HepG2 (cell line): ENCODE measurements at regions of chr17 and their contacts with region 1.

Region 1: DNA sequence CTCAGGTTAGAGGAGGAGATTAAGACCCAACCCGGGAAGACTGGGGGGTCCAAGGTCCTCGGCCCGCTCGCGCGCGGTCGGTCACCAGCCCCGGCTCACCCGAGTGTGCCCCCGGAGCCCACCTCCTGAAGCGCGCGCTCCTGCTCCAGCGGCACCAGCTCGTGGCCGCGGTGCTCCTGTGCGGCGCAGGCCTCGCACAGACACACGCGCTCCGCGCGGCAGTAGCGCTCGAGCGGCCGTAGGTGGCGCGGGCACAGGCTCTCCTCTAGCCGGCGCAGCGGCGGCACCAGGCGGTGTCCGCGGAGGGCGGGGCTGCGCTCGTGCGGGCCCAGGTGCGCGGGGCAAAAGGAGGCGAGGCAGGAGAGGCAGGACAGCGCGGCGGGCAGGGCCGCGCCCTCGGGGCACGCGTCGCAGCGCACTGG is 618 bp downstream of the TRIM47 start:
- DNase-seq: peak; percentile 68
- ATAC-seq: peak; percentile 54
- H3K4me3 ChIP-seq: peak overlapping the region; percentile 71 to 84 (median 84)
- H3K27ac ChIP-seq: peak overlapping the region; percentile 99
- H3K4me1 ChIP-seq: peaks cover 46% of the 10 kb centered on the region
- H3K27me3 ChIP-seq: no peaks in the 10 kb centered on the region
- CTCF ChIP-seq: peak; percentile 59; the same call in 1 of the 2 replicates
- EP300 ChIP-seq: 0 out of 4 replicates have a peak, but pooled peaks of 1 of the 2 experiments have one; percentile 22
- POLR2A ChIP-seq: no peak; a peak in 1 of 4 replicates
- RAD21 ChIP-seq: peak; percentile 90

Region 2: DNA sequence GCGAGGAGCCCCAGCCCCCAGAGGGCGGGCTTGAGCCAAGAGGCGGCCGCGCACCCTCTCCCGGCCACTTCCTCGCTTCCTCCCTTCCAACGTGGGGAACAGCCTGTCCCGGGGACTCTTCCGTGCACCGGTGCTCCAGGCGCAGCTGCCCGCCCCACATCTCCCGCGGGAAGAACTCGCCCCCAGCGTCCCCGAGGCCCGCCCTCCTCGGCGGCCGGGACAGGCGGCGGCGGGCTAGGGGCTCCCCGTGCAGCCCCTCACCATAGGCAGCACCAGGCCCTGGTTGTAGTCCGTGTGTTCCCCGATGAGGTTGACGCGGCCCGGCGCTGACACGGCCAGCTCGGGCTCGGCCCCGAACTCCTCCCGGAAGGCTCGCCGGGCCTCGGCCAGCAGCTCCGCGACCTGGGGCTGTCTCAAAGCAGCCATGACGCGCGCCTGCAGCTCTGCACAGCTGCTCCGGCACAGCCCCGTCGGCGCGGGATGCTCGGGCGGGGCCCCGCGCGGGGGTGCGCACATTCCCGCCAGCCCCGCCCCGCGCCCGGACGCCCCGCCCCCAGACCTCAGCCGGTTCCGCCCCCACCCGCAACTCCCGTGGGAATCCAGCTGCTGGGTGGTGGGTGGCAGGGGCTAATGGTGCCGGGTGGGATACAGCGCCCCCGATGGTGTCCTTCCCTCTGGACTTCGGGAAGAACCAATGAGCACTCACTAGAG is 112.9 kb before region 1 on chr17 and contains the start of gene GALK1:
- CTCF ChIA-PET with region 1: no interaction called
- POLR2A ChIA-PET with region 1: interaction called, 24 read pairs
- in situ Hi-C with region 1: no loop called
- intact Hi-C with region 1: no loop called
- DNase-seq: peak; percentile 59
- ATAC-seq: peak; percentile 73
- H3K4me3 ChIP-seq: peak within 1 kb of the TSS; percentile 77 to 87 (median 78)
- H3K27ac ChIP-seq: peak within 1 kb of the TSS; percentile 79
- H3K4me1 ChIP-seq: peaks cover 60% of the 10 kb centered on the region
- H3K27me3 ChIP-seq: no peaks in the 10 kb centered on the region
- CTCF ChIP-seq: peak; percentile 78
- EP300 ChIP-seq: no peak
- POLR2A ChIP-seq: peak in 1 of 2 experiments; percentile 73; a peak in 2 of 4 replicates
- RAD21 ChIP-seq: peak; percentile 46
- total RNA-seq, gene GALK1: 93.6 and 95.6 TPM in 2 replicates

Region 3: DNA sequence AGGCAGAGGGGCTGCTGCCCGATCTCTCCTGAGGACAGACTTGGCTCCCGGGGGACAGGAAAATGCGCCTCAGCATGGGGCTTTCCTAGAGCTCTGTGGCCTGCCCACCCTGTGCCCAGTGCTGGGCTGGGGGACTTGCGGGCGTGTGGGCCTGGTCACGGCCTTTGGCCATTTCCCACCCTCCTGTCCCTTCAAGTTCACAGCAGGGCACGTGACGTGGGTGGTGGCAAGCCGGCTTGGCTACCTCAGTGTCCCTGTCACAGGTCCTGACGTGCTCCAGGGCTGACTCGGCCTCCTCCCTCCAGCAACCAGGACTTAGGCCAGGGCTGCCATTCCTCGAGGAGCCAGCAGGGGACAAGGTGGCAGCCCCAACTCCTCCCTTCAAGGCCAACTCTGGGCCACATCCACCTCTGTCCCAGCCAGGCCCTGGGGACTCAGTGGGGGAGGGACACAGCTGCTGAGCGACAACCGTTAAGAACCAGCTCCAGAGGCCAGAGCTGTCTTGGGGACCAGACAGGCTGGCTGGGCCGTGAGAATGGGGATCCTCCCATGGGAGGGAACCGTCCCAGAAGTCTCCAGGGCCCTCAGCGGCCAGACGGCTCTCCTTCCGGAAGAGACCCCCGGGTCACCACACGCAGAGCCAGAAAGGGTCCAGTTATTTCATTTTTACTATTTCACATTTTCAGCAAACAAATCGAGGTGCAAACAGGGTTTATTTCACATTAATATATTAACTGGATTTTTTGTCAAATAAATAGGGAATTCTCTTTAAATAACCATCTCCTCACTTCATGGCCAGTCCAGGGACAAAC is 32.5 kb before region 1 on chr17:
- CTCF ChIA-PET with region 1: interaction called, 4 read pairs
- POLR2A ChIA-PET with region 1: interaction called, 229 read pairs
- in situ Hi-C with region 1: no loop called
- intact Hi-C with region 1: no loop called
- DNase-seq: peak; percentile 86
- ATAC-seq: peak; percentile 65
- H3K4me3 ChIP-seq: peak overlapping the region; percentile 66 to 84 (median 66)
- H3K27ac ChIP-seq: peak overlapping the region; percentile 79
- H3K4me1 ChIP-seq: peaks cover 70% of the 10 kb centered on the region
- H3K27me3 ChIP-seq: no peaks in the 10 kb centered on the region
- CTCF ChIP-seq: peak; percentile 90
- EP300 ChIP-seq: peak in 1 of 2 experiments; percentile 31; a peak in 1 of 4 replicates
- POLR2A ChIP-seq: peak in 1 of 2 experiments; percentile 67; a peak in 2 of 4 replicates
- RAD21 ChIP-seq: peak; percentile 82

Region 4: DNA sequence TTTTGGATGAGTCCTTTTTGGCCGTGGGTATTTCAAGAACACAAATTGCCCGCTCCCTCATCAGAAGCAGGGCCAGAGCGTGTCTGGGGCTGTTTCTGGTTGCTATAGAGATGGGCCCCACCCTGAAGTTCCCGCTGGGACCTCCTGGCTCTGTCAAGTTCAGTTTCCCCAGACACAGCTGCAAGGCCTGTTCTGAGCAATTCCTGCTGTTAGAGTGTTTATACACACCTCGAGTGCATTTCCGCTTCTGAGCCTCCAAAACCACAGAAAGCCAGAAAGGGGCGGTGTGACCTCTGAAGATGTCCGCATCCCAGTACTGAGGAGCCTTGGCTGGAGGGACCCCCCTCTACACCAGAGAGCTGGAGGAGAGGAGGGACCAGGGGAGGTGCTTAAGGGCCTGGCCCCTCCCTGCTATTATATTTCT is 13.3 kb before region 1 on chr17:
- CTCF ChIA-PET with region 1: no interaction called
- POLR2A ChIA-PET with region 1: interaction called, 454 read pairs
- in situ Hi-C with region 1: no loop called
- intact Hi-C with region 1: no loop called
- DNase-seq: no peak
- ATAC-seq: no peak
- H3K4me3 ChIP-seq: no peak overlapping the region
- H3K27ac ChIP-seq: no peak overlapping the region
- H3K4me1 ChIP-seq: peaks cover 69% of the 10 kb centered on the region
- H3K27me3 ChIP-seq: no peaks in the 10 kb centered on the region
- CTCF ChIP-seq: no peak
- EP300 ChIP-seq: no peak
- POLR2A ChIP-seq: no peak
- RAD21 ChIP-seq: no peak

Region 5: DNA sequence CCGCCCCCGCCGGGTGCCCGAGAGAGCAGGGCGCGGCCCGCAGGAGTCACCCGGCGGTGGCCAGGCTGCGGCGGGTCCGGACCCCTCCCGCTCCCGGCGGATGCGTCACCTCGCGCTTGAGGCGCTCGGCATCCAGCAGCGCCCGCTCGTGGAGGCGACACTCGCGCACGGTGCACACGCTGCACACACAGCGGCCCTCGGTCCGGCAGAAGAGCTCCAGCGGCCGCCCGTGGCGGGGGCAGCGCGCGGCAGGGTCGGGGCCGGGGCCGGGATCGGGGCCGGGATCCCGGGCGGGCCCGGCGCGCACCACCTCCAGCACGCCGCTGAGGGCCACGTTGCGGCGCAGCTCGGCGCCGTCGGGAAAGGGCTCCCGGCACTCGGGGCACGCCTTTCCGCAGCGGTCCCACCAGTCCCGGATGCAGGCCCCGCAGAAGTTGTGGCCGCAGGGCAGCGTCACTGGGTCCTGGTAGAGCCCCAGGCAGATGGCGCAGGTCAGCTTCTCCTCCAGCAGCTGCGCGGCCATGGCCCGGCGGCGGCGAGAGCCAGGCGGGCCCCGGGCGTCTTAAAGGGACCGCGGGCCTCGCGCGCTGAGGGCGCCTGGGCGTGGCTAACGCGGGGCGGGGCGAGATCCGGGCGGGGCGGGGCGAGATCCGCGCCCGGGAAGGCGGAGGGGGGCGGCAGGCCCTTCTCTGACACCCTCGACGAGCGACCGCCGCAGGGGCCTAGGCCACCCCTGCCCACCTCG is 18.8 kb after region 1 on chr17 and contains the start of gene TRIM65:
- CTCF ChIA-PET with region 1: interaction called, 5 read pairs
- POLR2A ChIA-PET with region 1: interaction called, 423 read pairs
- in situ Hi-C with region 1: no loop called
- intact Hi-C with region 1: loop called (anchors 1 kb)
- DNase-seq: peak; percentile 56
- ATAC-seq: peak; percentile 18
- H3K4me3 ChIP-seq: peak within 1 kb of the TSS; percentile 68 to 83 (median 75)
- H3K27ac ChIP-seq: peak within 1 kb of the TSS; percentile 79
- H3K4me1 ChIP-seq: peaks cover 46% of the 10 kb centered on the region
- H3K27me3 ChIP-seq: no peaks in the 10 kb centered on the region
- CTCF ChIP-seq: peak; percentile 64
- EP300 ChIP-seq: no peak
- POLR2A ChIP-seq: peak in 1 of 2 experiments; percentile 92; a peak in 2 of 4 replicates
- RAD21 ChIP-seq: peak; percentile 84
- total RNA-seq, gene TRIM65: 22.4 and 24.6 TPM in 2 replicates

Region 6: DNA sequence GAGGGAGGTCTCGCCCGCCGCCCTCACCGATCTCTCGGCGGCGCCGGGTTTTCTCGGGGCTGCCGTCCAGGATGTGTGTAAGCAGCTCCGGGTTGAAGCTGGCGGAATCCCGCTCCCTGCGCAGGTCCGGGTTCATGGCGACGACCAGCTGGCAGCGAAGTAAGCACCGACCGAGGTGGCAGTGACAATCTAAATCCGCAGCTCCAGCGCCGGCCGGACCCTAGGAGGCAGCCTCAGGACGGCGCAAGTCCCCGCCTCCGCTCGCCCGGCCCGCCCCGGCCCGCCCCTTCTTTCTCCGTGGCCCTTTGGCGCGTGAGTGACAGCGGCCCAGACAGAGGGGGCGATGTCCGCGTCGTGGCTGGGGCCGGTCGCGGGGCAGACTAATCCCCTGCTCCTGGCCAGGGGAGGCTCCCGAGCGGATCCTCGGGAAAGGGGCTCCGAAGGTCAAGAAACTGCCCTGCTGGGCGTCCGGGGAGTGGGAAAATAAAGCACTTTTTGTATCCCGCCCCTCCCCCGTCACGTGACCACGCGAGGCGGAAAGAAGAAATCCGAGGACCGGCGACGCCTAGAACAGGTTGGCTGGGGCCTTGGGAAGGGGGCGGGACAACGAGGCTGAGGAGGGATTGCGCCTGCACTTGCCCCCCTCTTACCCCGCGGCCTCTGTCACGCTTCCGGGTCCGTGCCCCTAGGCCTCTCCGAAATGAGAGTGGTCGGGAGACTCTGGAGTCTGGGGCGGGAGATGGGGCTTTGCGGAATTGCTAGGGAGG is 101.4 kb after region 1 on chr17 and contains the starts of genes ACOX1 and TEN1:
- CTCF ChIA-PET with region 1: no interaction called
- POLR2A ChIA-PET with region 1: interaction called, 16 read pairs
- in situ Hi-C with region 1: no loop called
- intact Hi-C with region 1: no loop called
- DNase-seq: peak; percentile 98
- ATAC-seq: peak; percentile 87
- H3K4me3 ChIP-seq: peak within 1 kb of the TSS; percentile 74 to 98 (median 93)
- H3K27ac ChIP-seq: peak within 1 kb of the TSS; percentile 99
- H3K4me1 ChIP-seq: peaks cover 80% of the 10 kb centered on the region
- H3K27me3 ChIP-seq: no peaks in the 10 kb centered on the region; a peak in 1 of 5 replicates
- CTCF ChIP-seq: peak; percentile 72
- EP300 ChIP-seq: peak; percentile 12 to 52; a peak in 3 of 4 replicates
- POLR2A ChIP-seq: peak; percentile 87 to 97
- RAD21 ChIP-seq: no peak; the same call in none of the 2 replicates
- total RNA-seq, gene ACOX1: 120 and 156 TPM in 2 replicates
- total RNA-seq, gene TEN1: 14.7 and 18.0 TPM in 2 replicates

Region 7: DNA sequence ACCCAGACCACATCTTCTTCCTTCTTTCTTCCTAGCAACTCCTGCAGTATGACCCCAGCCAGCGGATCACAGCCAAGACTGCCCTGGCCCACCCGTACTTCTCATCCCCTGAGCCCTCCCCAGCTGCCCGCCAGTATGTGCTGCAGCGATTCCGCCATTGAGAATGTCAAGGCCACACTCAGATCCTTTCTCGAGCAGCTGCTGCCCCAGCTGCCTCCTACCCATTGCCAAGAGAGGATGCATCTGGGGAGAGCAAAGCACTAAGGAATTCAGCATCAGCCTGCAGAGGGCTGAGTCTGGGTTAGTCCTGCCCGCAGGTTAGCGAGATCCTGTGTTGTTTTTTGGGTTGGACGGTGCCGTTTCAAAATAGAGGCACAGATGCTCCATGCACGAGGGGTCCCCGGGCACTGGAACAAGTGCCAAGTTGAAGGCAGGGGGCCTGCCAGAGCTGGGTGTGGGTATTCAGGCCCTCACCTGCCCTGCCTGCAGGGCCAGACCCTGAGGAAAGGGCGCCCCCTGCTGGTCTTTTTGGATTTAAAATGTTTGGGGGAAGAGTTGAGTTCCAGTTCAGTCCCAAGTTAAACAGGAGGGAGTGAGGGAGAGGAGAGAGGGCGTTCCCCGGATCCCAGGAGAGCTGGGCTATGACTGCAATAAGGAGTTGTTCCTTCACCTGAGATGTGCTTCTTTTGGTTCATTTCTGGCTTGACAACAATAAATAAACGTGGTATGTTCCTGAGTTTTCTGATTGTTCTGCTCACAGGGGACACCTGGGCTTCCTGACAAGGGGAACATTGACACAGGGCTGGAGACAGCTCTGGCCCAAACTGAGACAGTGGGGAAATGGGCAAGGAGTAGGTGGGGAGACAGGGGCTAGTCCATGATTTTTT is 127.7 kb after region 1 on chr17:
- CTCF ChIA-PET with region 1: no interaction called
- POLR2A ChIA-PET with region 1: interaction called, 40 read pairs
- in situ Hi-C with region 1: no loop called
- intact Hi-C with region 1: no loop called
- DNase-seq: peak; percentile 82
- ATAC-seq: peak; percentile 42
- H3K4me3 ChIP-seq: no peak overlapping the region
- H3K27ac ChIP-seq: peak overlapping the region; percentile 83
- H3K4me1 ChIP-seq: peaks cover 55% of the 10 kb centered on the region
- H3K27me3 ChIP-seq: no peaks in the 10 kb centered on the region
- CTCF ChIP-seq: peak; percentile 96
- EP300 ChIP-seq: no peak
- POLR2A ChIP-seq: no peak
- RAD21 ChIP-seq: peak; percentile 97